ENCODE measurements at regions of chr2 and their contacts with region 1.

Region 1: GRCh38 chr2:195656859-195657633 is at the start of gene SLC39A10:
- DNase-seq: peak; percentile 100
- H3K4me3 Mint-ChIP-seq: peak within 1 kb of the TSS; percentile 86
- H3K27ac Mint-ChIP-seq: peak within 1 kb of the TSS; percentile 97
- H3K4me1 Mint-ChIP-seq: peaks cover 20% of the 10 kb centered on the region
- H3K27me3 Mint-ChIP-seq: no peaks in the 10 kb centered on the region
- total RNA-seq, gene SLC39A10: 33.4 and 37.1 TPM in 2 replicates

Region 2: GRCh38 chr2:195318440-195319111 is 338.5 kb before region 1 on chr2:
- intact Hi-C with region 1: loop called (anchors 2 kb)
- DNase-seq: peak; percentile 82
- H3K4me3 Mint-ChIP-seq: no peak overlapping the region
- H3K27ac Mint-ChIP-seq: no peak overlapping the region
- H3K4me1 Mint-ChIP-seq: peaks cover 10% of the 10 kb centered on the region
- H3K27me3 Mint-ChIP-seq: no peaks in the 10 kb centered on the region

Region 3: GRCh38 chr2:195486987-195487644 is 169.9 kb before region 1 on chr2:
- intact Hi-C with region 1: loop called (anchors 1 kb)
- DNase-seq: peak; percentile 77
- H3K4me3 Mint-ChIP-seq: peak overlapping the region; percentile 64
- H3K27ac Mint-ChIP-seq: peak overlapping the region; percentile 68
- H3K4me1 Mint-ChIP-seq: peaks cover 29% of the 10 kb centered on the region
- H3K27me3 Mint-ChIP-seq: no peaks in the 10 kb centered on the region

Region 4: GRCh38 chr2:195543902-195544894 is 112.8 kb before region 1 on chr2:
- intact Hi-C with region 1: loop called (anchors 1 kb)
- DNase-seq: peak; percentile 75
- H3K4me3 Mint-ChIP-seq: peak overlapping the region; percentile 29
- H3K27ac Mint-ChIP-seq: peak overlapping the region; percentile 91
- H3K4me1 Mint-ChIP-seq: peaks cover 67% of the 10 kb centered on the region
- H3K27me3 Mint-ChIP-seq: no peaks in the 10 kb centered on the region

Region 5: GRCh38 chr2:195612611-195613495 is 44.2 kb before region 1 on chr2:
- intact Hi-C with region 1: loop called (anchors 5 kb)
- DNase-seq: no peak
- H3K4me3 Mint-ChIP-seq: no peak overlapping the region
- H3K27ac Mint-ChIP-seq: no peak overlapping the region
- H3K4me1 Mint-ChIP-seq: peaks cover 12% of the 10 kb centered on the region
- H3K27me3 Mint-ChIP-seq: no peaks in the 10 kb centered on the region

Region 6: GRCh38 chr2:195768431-195768830 is 111.4 kb after region 1 on chr2:
- intact Hi-C with region 1: no loop called
- DNase-seq: no peak
- H3K4me3 Mint-ChIP-seq: no peak overlapping the region
- H3K27ac Mint-ChIP-seq: no peak overlapping the region
- H3K4me1 Mint-ChIP-seq: no peaks in the 10 kb centered on the region
- H3K27me3 Mint-ChIP-seq: peaks cover 3% of the 10 kb centered on the region

Region 7: GRCh38 chr2:195779491-195779890 is 122.4 kb after region 1 on chr2:
- intact Hi-C with region 1: no loop called
- DNase-seq: no peak
- H3K4me3 Mint-ChIP-seq: no peak overlapping the region
- H3K27ac Mint-ChIP-seq: no peak overlapping the region
- H3K4me1 Mint-ChIP-seq: no peaks in the 10 kb centered on the region
- H3K27me3 Mint-ChIP-seq: no peaks in the 10 kb centered on the region

Region 8: DNA sequence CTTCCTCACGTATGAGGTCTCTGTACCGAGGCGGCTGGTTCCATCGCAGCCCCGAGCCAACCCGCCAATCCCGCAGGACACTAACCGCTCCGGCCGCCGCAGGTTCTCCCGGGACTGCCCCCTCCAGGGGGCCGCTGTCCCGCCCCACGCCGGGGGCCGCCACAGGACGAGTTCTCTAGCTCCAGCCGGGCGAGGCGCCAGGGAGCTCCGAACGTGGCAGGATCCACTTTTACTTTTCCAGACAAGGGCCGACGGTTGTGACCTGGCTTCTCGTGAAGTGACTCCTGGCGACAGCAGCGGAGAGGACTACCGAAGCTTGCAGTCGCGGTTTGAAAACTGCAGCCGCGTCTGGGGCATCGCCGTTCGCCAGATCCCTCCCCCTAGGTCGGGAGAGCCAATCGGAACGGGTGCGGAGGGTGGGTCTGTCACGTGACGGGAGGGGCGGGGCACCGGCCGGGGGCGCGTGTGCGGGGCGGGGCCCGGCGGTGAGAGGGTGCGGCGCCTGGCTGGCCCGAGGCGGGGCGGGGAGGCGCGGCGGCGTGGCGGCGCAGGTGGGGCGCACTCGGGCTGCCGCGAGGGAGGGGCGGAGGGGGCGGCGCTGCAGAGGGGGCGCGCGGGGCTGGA is 514.3 kb after region 1 on chr2 and contains the start of gene STK17B:
- intact Hi-C with region 1: loop called (anchors 2 kb)
- DNase-seq: peak; percentile 98
- H3K4me3 Mint-ChIP-seq: peak within 1 kb of the TSS; percentile 93
- H3K27ac Mint-ChIP-seq: peak within 1 kb of the TSS; percentile 99
- H3K4me1 Mint-ChIP-seq: peaks cover 40% of the 10 kb centered on the region
- H3K27me3 Mint-ChIP-seq: no peaks in the 10 kb centered on the region
- total RNA-seq, gene STK17B: 129 and 131 TPM in 2 replicates